ENCODE measurements at regions of chr19 and their contacts with region 1.

Region 1: GRCh38 chr19:2027361-2027760 is 11.8 kb upstream of the BTBD2 start:
- DNase-seq: no peak
- ATAC-seq: no peak
- H3K4me3 ChIP-seq: no peak overlapping the region
- H3K27ac ChIP-seq: 0 out of 6 replicates have a peak overlapping the region, but pooled peaks of 1 of the 2 experiments have one; percentile 16
- H3K4me1 ChIP-seq: peaks cover 19% of the 10 kb centered on the region
- CTCF ChIP-seq: no peak
- EP300 ChIP-seq: no peak
- POLR2A ChIP-seq: no peak
- RAD21 ChIP-seq: no peak

Region 2: DNA sequence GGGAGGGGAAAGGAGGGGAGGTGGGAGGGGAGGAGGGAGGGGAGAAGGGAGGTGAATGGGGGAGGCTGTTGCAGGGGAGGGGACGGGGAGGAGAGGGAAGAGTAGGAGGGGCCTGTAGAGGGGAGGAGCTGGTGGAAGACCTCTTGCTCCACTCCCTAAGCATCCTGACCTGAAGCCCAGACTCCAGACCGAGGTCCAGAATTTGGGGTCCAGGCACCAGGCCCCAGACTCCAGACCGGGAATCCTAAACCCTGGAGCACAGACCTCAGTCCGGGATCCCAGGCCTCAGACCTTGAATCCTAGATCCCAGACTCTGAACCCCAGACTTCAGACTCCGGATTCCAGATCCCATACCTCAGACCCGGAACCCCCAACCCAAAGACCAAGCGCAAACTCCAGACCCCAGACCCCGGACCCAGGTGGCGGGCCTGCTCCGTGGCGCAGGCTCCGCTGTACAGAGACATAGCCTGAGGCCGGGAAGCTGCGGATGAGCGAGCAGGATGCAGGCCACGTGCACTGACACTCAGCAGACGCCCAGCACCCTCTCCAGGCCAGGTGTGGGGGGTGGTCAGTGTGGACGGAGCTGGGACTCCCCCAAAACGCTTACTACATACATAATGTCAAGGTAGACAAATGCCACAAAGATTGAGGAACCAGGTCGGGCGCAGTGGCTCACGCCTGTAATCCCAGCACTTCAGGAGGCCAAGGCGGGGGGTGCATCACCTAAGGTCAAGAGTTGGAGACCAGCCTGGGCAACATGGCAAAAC is 11.1 kb before region 1 on chr19:
- CTCF ChIA-PET with region 1: interaction called, 20 read pairs
- POLR2A ChIA-PET with region 1: no interaction called
- DNase-seq: peak; percentile 68 to 88
- ATAC-seq: peak; percentile 63 to 76
- H3K4me3 ChIP-seq: peak overlapping the region; percentile 26; the same call in 1 of the 3 replicates
- H3K27ac ChIP-seq: peak overlapping the region; percentile 88 to 100
- H3K4me1 ChIP-seq: peaks cover 13% of the 10 kb centered on the region
- CTCF ChIP-seq: no peak
- EP300 ChIP-seq: no peak
- POLR2A ChIP-seq: no peak
- RAD21 ChIP-seq: no peak